K562 (cell line): ENCODE measurements at regions of chr12 and their contacts with region 1.

Region 1: GRCh38 chr12:123075646-123076171 is 75.2 kb downstream of the PITPNM2 start:
- DNase-seq: peak; percentile 51 to 63 (median 54)
- ATAC-seq: peak; percentile 88
- H3K4me3 ChIP-seq: no peak overlapping the region
- H3K27ac ChIP-seq: no peak overlapping the region
- H3K4me1 ChIP-seq: peaks cover 13 to 26% of the 10 kb centered on the region in 2 experiments; a peak in 4 of 5 replicates
- H3K27me3 ChIP-seq: no peaks in the 10 kb centered on the region
- CTCF ChIP-seq: peak; percentile 52 to 63 (median 52); a peak in 5 of 6 replicates
- EP300 ChIP-seq: no peak
- POLR2A ChIP-seq: no peak
- RAD21 ChIP-seq: peak in 1 of 2 experiments; percentile 42; a peak in 2 of 4 replicates

Region 2: DNA sequence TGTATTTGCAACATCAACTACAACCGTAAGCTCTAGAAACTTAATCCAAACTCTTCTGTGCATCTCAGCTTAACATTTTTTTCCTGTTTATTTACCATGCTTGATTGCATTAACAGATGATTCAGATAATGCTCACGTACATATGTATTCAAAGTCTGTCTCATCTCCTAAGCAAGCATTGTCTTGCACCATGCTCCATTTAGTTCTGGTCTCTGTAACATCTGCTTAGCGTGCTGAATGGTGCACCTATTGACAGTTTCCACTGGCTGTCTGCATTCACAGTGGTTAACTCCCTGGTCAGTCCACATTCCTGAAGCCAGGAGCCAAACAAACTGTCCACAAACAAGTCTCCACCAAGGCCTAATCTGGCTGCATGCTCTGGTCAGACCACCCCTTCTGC is 464.8 kb before region 1 on chr12:
- CTCF ChIA-PET with region 1: no interaction called
- POLR2A ChIA-PET with region 1: no interaction called
- in situ Hi-C with region 1: no loop called
- intact Hi-C with region 1: no loop called
- DNase-seq: no peak
- ATAC-seq: no peak
- H3K4me3 ChIP-seq: no peak overlapping the region
- H3K27ac ChIP-seq: no peak overlapping the region
- H3K4me1 ChIP-seq: no peaks in the 10 kb centered on the region
- H3K27me3 ChIP-seq: no peaks in the 10 kb centered on the region
- CTCF ChIP-seq: no peak
- EP300 ChIP-seq: no peak
- POLR2A ChIP-seq: no peak
- RAD21 ChIP-seq: no peak

Region 3: GRCh38 chr12:123058980-123059379 is 16.7 kb before region 1 on chr12:
- CTCF ChIA-PET with region 1: no interaction called
- POLR2A ChIA-PET with region 1: interaction called, 23 read pairs
- in situ Hi-C with region 1: no loop called
- intact Hi-C with region 1: no loop called
- DNase-seq: no peak
- ATAC-seq: no peak
- H3K4me3 ChIP-seq: no peak overlapping the region
- H3K27ac ChIP-seq: no peak overlapping the region
- H3K4me1 ChIP-seq: peaks cover 19 to 20% of the 10 kb centered on the region in 2 experiments; a peak in 4 of 5 replicates
- H3K27me3 ChIP-seq: no peaks in the 10 kb centered on the region
- CTCF ChIP-seq: no peak
- EP300 ChIP-seq: no peak
- POLR2A ChIP-seq: no peak
- RAD21 ChIP-seq: no peak

Region 4: DNA sequence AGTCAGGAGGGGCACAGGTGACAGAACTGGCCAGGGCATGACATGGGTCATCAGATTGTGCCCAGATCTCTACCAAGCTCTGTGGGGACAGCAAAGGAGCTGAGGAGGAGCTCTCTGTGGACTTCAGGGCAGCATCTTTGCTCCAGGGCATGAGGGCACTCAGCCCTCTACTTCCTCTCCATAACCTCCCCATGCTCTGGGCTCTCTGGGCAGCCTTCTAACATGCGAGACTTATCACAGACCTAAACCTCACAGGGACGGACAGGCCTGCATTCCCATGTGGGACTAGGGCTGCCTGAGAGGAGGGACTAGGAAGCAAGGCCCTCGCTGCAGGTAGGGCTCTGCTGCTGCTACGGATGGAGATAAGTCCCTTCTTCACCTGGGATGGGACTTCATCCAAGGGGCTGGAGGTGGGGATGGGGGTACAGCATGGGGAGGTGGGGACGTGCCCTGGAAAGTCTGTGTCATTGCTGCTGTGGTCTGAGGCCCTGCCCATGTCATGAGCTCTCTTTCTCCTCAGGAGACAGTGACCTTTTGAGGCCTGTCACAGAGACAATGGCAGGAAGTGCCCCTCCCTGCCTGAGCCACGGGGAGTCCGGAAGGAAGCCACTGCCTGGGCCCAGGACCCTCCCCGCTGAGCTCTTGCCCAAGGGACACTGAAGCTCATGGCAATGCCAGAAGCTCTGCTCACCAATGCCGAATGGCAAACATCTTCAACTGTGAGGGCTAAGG is 31.1 kb after region 1 on chr12:
- CTCF ChIA-PET with region 1: no interaction called
- POLR2A ChIA-PET with region 1: no interaction called
- in situ Hi-C with region 1: no loop called
- intact Hi-C with region 1: loop called (anchors 1 kb)
- DNase-seq: peak; percentile 66 to 82 (median 70)
- ATAC-seq: peak; percentile 90
- H3K4me3 ChIP-seq: no peak overlapping the region
- H3K27ac ChIP-seq: peak overlapping the region; percentile 72
- H3K4me1 ChIP-seq: peaks cover 20 to 21% of the 10 kb centered on the region in 2 experiments
- H3K27me3 ChIP-seq: no peaks in the 10 kb centered on the region; a peak in 1 of 5 replicates
- CTCF ChIP-seq: no peak
- EP300 ChIP-seq: no peak; the same call in 1 of the 2 replicates
- POLR2A ChIP-seq: 0 out of 2 replicates have a peak, but pooled peaks have one; percentile 22
- RAD21 ChIP-seq: 0 out of 4 replicates have a peak, but pooled peaks of 1 of the 2 experiments have one; percentile 21

Region 5: DNA sequence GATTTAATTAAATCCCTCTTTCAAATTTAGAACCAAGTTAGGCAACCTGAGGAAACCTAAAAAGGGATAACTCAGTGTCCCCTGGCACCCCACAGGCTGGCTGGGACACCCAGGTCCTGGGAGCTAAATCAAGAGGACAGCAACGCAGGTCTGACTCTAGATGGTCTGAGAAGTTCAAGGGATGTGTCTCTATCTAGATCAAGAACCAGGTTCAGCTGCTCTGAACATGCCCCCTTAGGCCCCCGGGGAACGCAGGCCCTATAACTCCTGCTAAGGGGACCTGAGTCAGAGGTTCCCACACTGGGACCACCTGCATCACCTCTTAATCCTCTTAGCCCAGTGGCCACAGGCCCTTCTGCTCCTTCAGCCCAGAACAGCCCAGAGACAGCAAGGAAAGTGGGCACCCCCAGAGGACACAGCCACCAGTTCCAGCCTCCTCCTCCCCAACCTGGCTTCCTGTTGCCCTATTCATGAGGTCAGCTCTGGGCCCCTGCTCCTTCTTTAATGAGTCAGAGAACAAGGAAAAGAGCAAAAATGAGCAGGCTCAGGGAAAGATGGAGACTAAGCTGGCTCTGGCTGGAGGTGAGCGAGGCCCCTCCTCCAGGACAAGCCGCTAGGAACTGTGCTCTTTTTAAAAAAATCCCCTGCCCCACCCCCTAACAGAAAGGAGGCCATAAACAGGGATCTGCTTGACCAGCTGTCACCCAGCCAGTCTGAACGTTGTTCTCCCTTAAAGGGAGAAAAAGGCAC is 64.4 kb after region 1 on chr12:
- CTCF ChIA-PET with region 1: no interaction called
- POLR2A ChIA-PET with region 1: no interaction called
- in situ Hi-C with region 1: no loop called
- intact Hi-C with region 1: no loop called
- DNase-seq: peak in 3 of 4 experiments; percentile 35 to 50 (median 38)
- ATAC-seq: peak; percentile 62
- H3K4me3 ChIP-seq: no peak overlapping the region
- H3K27ac ChIP-seq: peak overlapping the region; percentile 18; the same call in 1 of the 3 replicates
- H3K4me1 ChIP-seq: peaks cover 11 to 31% of the 10 kb centered on the region in 2 experiments; a peak in 4 of 5 replicates
- H3K27me3 ChIP-seq: no peaks in the 10 kb centered on the region
- CTCF ChIP-seq: no peak
- EP300 ChIP-seq: no peak
- POLR2A ChIP-seq: no peak
- RAD21 ChIP-seq: no peak